ENCODE measurements at regions of chr16 and their contacts with region 1.

Region 1: DNA sequence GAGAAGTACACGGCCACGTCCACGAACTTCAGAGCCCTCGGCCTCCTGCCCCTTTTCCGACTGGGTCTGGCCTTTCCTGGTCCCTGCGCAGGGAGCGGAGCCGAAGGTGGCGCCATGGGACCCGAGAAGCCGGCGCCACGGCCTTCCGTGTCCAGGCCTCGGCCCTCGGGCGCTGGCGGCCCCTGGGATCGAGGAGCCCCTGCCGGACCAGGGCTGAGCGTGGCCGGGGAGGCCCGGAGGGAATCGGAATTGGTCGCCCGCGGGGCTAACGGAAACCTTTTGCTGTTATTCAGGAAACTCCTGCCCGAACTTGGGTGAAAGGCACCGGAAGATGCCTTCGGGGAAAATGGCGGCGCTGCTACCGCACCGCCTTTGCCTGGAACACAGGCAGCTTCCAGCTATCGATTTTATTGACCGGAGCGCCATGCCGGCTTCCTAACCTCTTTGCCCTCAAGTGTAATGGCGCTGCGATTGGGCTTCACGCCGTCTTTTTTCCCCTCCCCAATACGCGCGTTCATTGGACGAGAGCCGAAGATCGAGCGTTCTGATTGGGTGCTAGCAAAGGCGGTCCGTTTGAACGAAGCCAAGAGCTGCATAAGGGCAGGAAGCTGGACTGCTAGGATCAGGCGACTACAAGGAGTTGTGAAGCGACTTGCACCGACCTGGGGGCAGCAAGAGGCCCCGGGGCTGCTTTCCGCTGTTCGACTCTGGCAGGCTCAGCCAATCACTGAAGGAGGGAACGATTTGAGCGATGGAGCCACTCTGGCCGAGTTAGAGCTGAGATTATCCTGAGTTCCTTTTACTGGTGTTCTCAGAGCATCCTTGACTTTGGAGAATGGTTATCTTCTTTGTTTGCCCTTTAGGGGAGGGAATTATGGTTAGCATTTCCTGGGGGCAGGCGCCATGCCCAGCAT is at the start of gene ZNF689:
- DNase-seq: peak; percentile 93 to 96 (median 96)
- ATAC-seq: peak; percentile 97 to 99
- H3K4me3 ChIP-seq: peak within 1 kb of the TSS; percentile 88
- H3K27ac ChIP-seq: peak within 1 kb of the TSS; percentile 94
- H3K4me1 ChIP-seq: no peaks in the 10 kb centered on the region
- H3K27me3 ChIP-seq: no peaks in the 10 kb centered on the region
- total RNA-seq, gene ZNF689: 5.6 to 7.1 (median 6.3) TPM

Region 2: DNA sequence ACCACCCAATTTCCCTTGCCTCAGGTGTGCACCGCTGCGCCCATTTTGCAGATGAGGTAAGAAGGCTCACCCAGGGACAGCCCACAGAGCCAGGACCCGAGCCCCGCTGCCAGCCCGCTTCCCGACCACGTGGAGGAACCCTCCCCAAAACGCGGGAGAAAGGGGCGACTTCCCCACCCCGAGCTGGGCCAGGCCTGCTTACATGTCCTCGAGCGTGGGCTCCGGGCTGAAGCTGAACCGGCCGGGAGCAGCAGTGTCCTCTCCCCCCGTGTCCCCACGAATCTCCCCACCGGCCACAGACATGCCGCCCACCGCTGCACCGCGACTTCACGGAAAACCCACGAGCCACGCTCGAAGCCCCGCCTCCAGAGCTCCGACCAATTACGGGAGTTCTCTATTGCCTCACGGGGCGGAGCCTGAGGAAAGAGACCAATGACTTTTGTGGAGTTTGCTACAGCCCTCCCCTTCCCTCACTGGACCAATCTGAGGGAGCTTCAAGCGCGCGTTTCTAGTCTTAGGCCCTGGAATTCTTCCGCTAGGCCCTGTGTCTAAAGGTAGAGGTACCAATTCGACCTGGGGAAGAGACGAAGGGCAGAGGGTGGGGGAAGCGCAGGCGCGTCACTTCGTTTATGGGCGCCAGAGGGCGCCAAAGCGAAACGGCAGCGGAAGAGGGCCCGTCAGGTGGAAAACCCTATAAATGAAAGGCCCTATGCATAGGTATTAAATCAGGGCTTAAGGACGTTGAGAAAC is 180.3 kb before region 1 on chr16 and contains the start of gene DCTPP1:
- intact Hi-C with region 1: loop called in 1 of 4 experiments (anchors 10 kb)
- DNase-seq: peak; percentile 96 to 98 (median 96)
- ATAC-seq: peak; percentile 98 to 99
- H3K4me3 ChIP-seq: peak within 1 kb of the TSS; percentile 43
- H3K27ac ChIP-seq: peak within 1 kb of the TSS; percentile 78
- H3K4me1 ChIP-seq: peaks cover 5% of the 10 kb centered on the region
- H3K27me3 ChIP-seq: no peaks in the 10 kb centered on the region
- total RNA-seq, gene DCTPP1: 26.9 to 46.2 (median 30.5) TPM

Measured in right cardiac atrium (tissue), 5 donors.